HEK293 (cell line): ENCODE measurements at regions of chr3 and their contacts with region 1.

Region 1: GRCh38 chr3:44323341-44323955 is 15.1 kb upstream of the TCAIM start:
- H3K4me3 ChIP-seq: no peak overlapping the region
- H3K27ac ChIP-seq: no peak overlapping the region
- H3K4me1 ChIP-seq: no peaks in the 10 kb centered on the region
- CTCF ChIP-seq: no peak

Region 2: DNA sequence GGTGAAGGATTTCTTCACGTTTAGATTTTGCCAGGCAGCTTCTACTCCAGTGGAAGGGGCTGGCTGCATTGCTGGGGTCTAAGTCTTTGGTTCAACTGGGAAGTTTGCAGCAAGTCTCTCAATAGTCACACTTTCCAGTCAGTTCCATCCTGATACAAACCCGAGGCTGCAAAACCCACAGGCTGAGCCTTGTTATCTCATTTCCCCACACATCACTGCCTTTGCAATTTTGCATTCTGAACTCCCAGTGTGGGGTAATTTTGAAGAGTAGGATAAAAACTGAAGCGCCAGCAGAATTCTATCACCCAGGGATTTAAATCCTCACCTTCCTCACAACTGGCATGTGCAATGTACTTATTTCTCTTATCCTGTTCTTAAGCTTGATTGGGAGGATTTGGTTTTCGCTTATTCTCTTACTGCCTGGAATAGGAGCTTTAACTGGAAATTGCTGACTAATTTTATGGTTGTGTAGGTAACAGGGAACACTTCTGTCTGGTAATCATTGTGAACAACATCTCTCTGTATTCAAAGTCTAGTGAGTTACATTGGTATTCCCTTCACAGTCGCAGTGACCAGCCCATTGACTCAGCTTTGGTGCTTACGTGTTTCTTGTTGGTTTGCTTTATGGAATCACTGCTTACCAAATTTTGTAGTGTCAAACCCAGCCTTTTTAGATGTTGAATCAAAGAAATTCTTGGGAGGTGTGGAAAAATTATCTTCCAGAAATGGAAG is 223.7 kb before region 1 on chr3:
- CTCF ChIA-PET with region 1: no interaction called
- POLR2A ChIA-PET with region 1: no interaction called
- H3K4me3 ChIP-seq: no peak overlapping the region
- H3K27ac ChIP-seq: no peak overlapping the region
- H3K4me1 ChIP-seq: no peaks in the 10 kb centered on the region
- CTCF ChIP-seq: no peak

Region 3: DNA sequence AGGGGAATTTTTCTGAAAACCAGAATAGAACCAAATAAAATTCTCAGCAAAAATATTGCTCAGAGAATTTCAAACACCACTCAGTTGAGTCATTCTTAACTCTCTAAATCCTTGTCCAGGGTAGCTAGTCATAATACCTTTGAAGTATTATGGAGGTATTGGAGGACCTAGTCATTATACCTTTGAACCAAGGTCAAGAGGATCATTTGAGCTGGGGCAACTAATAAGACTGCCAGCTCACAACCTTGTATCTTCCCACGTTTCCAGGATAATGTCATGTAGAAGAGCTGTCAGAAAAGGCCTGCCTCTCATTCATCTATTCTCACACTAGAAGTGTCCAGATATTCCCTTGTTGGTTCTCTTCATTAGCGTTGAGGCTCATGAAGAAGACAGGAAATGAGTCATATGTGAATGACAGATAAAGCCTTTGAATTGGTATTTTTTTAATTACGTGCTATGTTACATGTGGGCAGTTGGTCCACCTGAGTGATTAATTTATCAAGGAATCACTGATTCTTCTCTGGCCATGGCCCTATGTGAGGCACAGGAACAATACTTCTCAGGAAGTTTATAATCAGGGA is 33.5 kb before region 1 on chr3:
- CTCF ChIA-PET with region 1: no interaction called
- POLR2A ChIA-PET with region 1: no interaction called
- H3K4me3 ChIP-seq: no peak overlapping the region
- H3K27ac ChIP-seq: no peak overlapping the region
- H3K4me1 ChIP-seq: no peaks in the 10 kb centered on the region
- CTCF ChIP-seq: no peak

Region 4: DNA sequence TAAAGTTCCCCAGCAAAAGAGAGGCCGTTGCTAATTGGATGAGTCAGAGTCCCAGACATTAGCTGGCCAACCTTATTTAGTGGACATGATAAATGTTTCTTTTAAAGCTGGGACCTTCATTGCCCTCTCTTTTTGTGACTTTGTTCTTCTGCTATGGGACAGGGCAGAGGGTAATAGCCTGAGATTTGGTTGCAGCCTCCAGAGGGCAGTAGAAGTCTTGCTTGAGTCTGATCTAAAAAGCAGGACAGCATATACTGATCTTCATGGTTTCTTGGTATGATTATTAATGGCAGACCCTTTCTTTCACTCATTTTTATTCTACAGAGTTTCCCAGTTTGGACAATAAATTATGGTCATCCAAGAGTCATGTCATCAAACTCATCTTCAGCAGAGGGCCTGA is 206.5 kb after region 1 on chr3:
- CTCF ChIA-PET with region 1: interaction called, 11 read pairs
- POLR2A ChIA-PET with region 1: no interaction called
- H3K4me3 ChIP-seq: no peak overlapping the region
- H3K27ac ChIP-seq: no peak overlapping the region
- H3K4me1 ChIP-seq: no peaks in the 10 kb centered on the region
- CTCF ChIP-seq: no peak